ENCODE measurements at regions of chr7 and their contacts with region 1.

Region 1: DNA sequence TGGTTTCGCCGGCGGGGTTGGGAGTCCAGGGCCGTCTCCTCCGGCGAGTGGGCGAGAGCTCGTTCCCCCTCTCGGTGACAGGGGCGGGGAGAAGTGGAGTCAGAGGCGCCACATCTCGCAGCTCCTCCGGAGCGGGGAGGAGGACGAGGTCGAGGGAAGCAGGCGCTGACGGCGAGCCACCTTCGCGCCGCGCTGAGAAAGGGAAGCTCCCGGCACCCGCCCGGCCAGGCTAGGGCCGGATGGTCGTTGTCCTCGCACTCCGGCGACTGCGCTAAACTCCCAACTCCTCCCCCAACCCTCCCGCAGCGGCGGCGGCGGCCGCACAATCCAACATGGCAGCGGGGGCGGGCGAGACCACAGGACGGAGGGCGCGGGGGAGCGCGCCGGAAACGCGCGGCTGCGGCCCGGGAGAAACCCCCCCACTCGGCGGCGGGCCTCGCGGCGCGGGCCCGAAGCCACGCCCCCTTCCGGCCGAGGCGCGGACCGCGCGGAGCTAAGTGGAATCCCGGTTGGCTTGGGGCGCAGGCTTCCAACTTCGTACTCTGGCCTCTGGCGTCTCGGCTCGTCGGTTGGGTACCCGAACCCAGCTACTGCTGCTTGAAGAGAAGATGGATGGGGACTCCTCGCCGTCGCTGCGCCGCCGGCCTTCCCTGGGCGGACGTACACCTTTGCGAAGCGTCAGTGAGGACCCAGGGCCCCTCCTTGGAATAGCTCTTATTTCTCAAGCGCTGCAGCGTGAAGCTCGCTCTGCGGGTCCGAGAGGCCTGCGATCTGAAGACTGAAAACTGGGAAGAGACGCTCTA is at the start of gene WASL:
- DNase-seq: peak; percentile 89
- ATAC-seq: peak; percentile 85
- H3K4me3 Mint-ChIP-seq: peak within 1 kb of the TSS; percentile 93
- H3K27ac Mint-ChIP-seq: peak within 1 kb of the TSS; percentile 93
- H3K4me1 Mint-ChIP-seq: peaks cover 54% of the 10 kb centered on the region
- H3K27me3 Mint-ChIP-seq: no peaks in the 10 kb centered on the region
- CTCF ChIP-seq: no peak
- total RNA-seq, gene WASL: 5.5 and 6.9 TPM in 2 replicates

Region 2: GRCh38 chr7:123557398-123558288 is 191.3 kb before region 1 on chr7 and contains the start of gene NDUFA5:
- CTCF ChIA-PET with region 1: no interaction called
- POLR2A ChIA-PET with region 1: interaction called, 28 read pairs
- intact Hi-C with region 1: loop called (anchors 1 kb)
- DNase-seq: peak; percentile 80
- ATAC-seq: peak; percentile 97
- H3K4me3 Mint-ChIP-seq: no peak within 1 kb of the TSS
- H3K27ac Mint-ChIP-seq: no peak within 1 kb of the TSS
- H3K4me1 Mint-ChIP-seq: peaks cover 10% of the 10 kb centered on the region
- H3K27me3 Mint-ChIP-seq: peaks cover 10% of the 10 kb centered on the region
- CTCF ChIP-seq: no peak
- total RNA-seq, gene NDUFA5: 54.3 and 63.8 TPM in 2 replicates

Measured in activated B cell treated with CpG ODN at 0.5 μM for 24 hours (primary cell).